ENCODE measurements at regions of chr9 and their contacts with region 1.

Region 1: GRCh38 chr9:118230319-118230718 is 526.1 kb downstream of the TLR4 start:
- DNase-seq: no peak
- H3K4me3 ChIP-seq: no peak overlapping the region
- H3K27ac ChIP-seq: no peak overlapping the region
- H3K4me1 ChIP-seq: no peaks in the 10 kb centered on the region
- H3K27me3 ChIP-seq: no peaks in the 10 kb centered on the region
- CTCF ChIP-seq: no peak
- POLR2A ChIP-seq: no peak

Region 2: DNA sequence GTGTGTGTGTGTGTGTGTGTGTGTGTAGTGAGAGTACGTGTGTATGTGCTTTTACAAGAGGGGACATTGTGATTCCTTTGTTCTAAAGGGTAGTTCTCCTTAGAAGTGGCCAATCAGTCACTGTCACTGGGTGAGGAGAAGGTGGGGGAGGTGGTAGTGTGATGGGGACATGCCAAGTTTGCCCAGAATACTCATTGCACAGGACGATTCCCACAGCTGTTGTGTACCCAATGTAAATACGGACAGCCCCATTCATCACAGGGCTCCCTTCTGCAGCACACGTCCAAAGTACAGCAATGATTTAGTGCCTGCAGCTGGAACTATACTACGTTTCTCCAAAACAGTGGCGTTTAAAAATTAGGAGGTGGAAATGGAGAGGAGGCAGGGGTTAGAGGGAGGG is 238.3 kb before region 1 on chr9:
- CTCF ChIA-PET with region 1: no interaction called
- POLR2A ChIA-PET with region 1: no interaction called
- dilution Hi-C with region 1: no loop called
- intact Hi-C with region 1: no loop called
- DNase-seq: no peak
- H3K4me3 ChIP-seq: no peak overlapping the region
- H3K27ac ChIP-seq: no peak overlapping the region
- H3K4me1 ChIP-seq: no peaks in the 10 kb centered on the region
- H3K27me3 ChIP-seq: no peaks in the 10 kb centered on the region
- CTCF ChIP-seq: no peak
- POLR2A ChIP-seq: no peak

Region 3: DNA sequence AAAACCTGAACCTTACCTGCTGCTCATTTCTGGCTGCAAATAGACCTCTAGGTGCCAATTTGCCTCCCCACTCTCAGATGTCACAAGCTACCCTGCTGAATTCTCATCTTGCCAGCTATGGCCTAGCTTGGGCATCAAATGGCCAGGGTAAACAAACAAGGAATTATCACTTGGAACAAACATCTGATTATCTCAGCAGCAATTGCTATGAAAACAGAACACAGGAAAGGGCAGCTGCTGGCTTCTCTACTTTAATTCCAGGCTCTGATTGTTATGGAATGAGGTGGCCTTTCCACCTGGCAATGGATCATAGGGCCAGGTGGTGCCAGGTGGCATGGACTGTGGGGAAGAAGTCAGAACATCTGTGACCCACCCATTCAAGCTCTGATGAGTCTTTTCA is 21.0 kb before region 1 on chr9:
- CTCF ChIA-PET with region 1: no interaction called
- POLR2A ChIA-PET with region 1: no interaction called
- dilution Hi-C with region 1: no loop called
- intact Hi-C with region 1: loop called (anchors 1 kb)
- DNase-seq: no peak
- H3K4me3 ChIP-seq: no peak overlapping the region
- H3K27ac ChIP-seq: no peak overlapping the region
- H3K4me1 ChIP-seq: no peaks in the 10 kb centered on the region
- H3K27me3 ChIP-seq: no peaks in the 10 kb centered on the region
- CTCF ChIP-seq: no peak
- POLR2A ChIP-seq: no peak

Region 4: DNA sequence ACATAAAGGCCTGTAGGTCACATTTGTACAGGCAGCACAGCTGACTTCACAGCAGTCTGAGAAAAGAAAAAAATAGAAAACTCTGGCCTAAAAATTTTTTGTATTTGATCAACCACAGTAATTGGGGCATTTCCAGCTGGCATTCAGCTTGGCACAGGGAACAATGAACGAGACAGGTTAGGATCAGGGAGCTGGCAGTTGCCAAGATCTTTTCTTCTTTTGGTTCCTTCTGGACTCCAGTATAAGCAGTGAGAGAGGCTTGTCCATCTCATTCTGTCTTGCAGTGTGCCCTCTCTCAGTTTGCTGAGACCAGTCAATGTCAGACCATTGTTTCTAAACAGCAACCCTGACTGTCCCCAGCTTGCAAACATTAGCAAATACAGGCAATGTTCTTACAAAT is 75.0 kb after region 1 on chr9:
- CTCF ChIA-PET with region 1: no interaction called
- POLR2A ChIA-PET with region 1: no interaction called
- dilution Hi-C with region 1: no loop called
- intact Hi-C with region 1: no loop called
- DNase-seq: no peak
- H3K4me3 ChIP-seq: no peak overlapping the region
- H3K27ac ChIP-seq: no peak overlapping the region
- H3K4me1 ChIP-seq: no peaks in the 10 kb centered on the region
- H3K27me3 ChIP-seq: no peaks in the 10 kb centered on the region
- CTCF ChIP-seq: no peak
- POLR2A ChIP-seq: no peak

Region 5: DNA sequence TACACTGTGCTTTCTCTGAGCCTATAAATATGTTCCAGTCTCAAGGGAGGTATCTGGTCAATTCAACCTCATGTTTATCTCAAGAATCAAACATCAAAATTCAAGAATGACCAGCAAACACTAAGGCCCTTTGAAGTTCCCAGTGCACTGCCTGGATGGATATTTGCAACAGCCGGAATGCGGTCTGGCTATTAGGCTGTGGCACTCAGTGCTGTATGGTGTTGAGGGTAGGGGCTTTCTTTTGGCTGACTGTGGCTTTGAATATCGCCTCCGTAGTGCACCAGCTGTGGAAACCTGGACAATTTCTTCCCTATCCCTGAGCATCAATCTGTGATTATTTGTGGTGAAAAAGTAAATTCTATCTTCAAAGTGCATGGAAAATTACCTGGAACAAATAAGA is 918.5 kb after region 1 on chr9:
- CTCF ChIA-PET with region 1: no interaction called
- POLR2A ChIA-PET with region 1: no interaction called
- dilution Hi-C with region 1: no loop called
- intact Hi-C with region 1: no loop called
- DNase-seq: no peak
- H3K4me3 ChIP-seq: no peak overlapping the region
- H3K27ac ChIP-seq: no peak overlapping the region
- H3K4me1 ChIP-seq: no peaks in the 10 kb centered on the region
- H3K27me3 ChIP-seq: no peaks in the 10 kb centered on the region
- CTCF ChIP-seq: no peak
- POLR2A ChIP-seq: no peak